GM12878 (cell line): ENCODE measurements at regions of chr18 and their contacts with region 1.

Region 1: DNA sequence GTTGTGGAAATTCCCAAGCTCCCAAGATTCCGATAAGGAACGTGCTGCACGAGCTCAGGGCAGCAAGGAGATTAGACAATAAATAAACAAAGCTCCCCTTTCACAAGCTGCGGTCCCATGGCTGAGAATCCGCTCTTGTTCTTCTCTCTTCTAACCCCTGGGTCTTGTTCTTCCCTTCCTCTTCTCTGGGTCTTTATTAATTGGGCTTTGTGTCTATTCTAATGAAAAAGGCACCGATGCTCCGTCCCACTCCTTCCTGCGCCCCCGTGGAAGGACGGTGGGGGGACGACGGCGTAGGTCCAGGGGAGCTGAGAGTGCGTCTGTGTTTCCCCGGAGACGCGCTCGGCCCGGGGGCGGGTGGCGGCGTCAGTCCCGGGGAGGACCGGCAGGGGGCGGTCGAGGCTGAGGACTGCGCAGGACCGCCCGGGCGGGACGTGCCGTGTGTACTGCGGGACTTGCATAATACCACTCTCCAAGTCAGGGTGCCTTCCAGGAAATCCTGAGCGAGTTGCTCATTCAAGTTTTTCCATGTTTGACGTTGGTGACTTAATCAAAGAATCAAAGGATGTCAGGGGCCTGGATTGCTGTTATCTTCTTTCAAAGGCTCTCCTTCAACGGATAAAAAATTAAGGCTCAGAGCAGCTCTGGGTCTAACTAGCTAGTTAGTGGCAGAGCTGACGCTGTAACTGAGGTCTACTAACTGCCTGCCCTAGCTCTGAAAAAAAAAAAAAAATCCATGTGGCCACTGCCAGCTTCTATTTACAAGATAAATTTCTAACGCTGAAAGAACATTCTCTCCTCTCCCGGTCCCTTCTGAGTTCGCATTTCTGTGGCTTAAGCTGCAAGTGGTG is 321.4 kb downstream of the TGIF1 start:
- DNase-seq: no peak
- ATAC-seq: peak; percentile 99
- H3K4me3 ChIP-seq: no peak overlapping the region
- H3K27ac ChIP-seq: no peak overlapping the region
- H3K4me1 ChIP-seq: no peaks in the 10 kb centered on the region
- H3K27me3 ChIP-seq: no peaks in the 10 kb centered on the region
- CTCF ChIP-seq: peak; percentile 79 to 87 (median 87)
- EP300 ChIP-seq: no peak
- POLR2A ChIP-seq: no peak
- RAD21 ChIP-seq: peak; percentile 72

Region 2: DNA sequence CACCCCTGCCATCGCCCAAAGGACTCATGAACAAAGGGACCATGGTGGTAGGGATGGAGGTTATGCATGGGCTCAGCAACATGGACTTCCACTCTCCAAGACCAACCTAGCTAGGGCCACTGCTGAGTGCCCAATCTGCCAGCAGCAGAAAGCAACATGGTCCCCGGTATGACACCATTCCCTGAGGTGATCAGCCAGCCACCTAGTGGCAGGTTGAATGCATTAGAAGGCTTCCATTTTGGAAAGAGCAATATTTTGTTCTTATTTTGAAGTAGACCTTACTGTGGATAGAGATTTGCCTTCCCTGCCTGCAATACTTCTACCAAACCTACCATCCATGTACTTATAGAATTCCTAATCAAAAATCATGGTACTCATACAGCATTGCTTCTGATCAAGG is 1299.8 kb before region 1 on chr18:
- CTCF ChIA-PET with region 1: no interaction called
- POLR2A ChIA-PET with region 1: no interaction called
- RAD21 ChIA-PET with region 1: no interaction called
- SMC1A ChIA-PET with region 1: no interaction called
- in situ Hi-C with region 1: no loop called
- intact Hi-C with region 1: no loop called
- DNase-seq: no peak
- ATAC-seq: peak; percentile 71
- H3K4me3 ChIP-seq: no peak overlapping the region
- H3K27ac ChIP-seq: no peak overlapping the region
- H3K4me1 ChIP-seq: no peaks in the 10 kb centered on the region
- H3K27me3 ChIP-seq: no peaks in the 10 kb centered on the region
- CTCF ChIP-seq: peak in 2 of 3 experiments; percentile 32 to 48; a peak in 3 of 6 replicates
- EP300 ChIP-seq: no peak
- POLR2A ChIP-seq: no peak
- RAD21 ChIP-seq: no peak

Region 3: GRCh38 chr18:3692113-3692621 is 79.2 kb before region 1 on chr18:
- CTCF ChIA-PET with region 1: interaction called, 8 read pairs
- POLR2A ChIA-PET with region 1: no interaction called
- RAD21 ChIA-PET with region 1: interaction called, 11 read pairs
- SMC1A ChIA-PET with region 1: interaction called, 3 read pairs
- in situ Hi-C with region 1: no loop called
- intact Hi-C with region 1: no loop called
- DNase-seq: no peak
- ATAC-seq: peak; percentile 59
- H3K4me3 ChIP-seq: no peak overlapping the region
- H3K27ac ChIP-seq: no peak overlapping the region
- H3K4me1 ChIP-seq: no peaks in the 10 kb centered on the region
- H3K27me3 ChIP-seq: no peaks in the 10 kb centered on the region
- CTCF ChIP-seq: no peak
- EP300 ChIP-seq: no peak
- POLR2A ChIP-seq: no peak
- RAD21 ChIP-seq: no peak

Region 4: GRCh38 chr18:3758531-3758930 is 12.8 kb before region 1 on chr18:
- CTCF ChIA-PET with region 1: interaction called, 35 read pairs
- POLR2A ChIA-PET with region 1: interaction called, 3 read pairs
- RAD21 ChIA-PET with region 1: no interaction called
- SMC1A ChIA-PET with region 1: interaction called, 14 read pairs
- in situ Hi-C with region 1: no loop called
- intact Hi-C with region 1: no loop called
- DNase-seq: no peak
- ATAC-seq: no peak
- H3K4me3 ChIP-seq: no peak overlapping the region
- H3K27ac ChIP-seq: no peak overlapping the region
- H3K4me1 ChIP-seq: no peaks in the 10 kb centered on the region
- H3K27me3 ChIP-seq: no peaks in the 10 kb centered on the region
- CTCF ChIP-seq: no peak
- EP300 ChIP-seq: no peak
- POLR2A ChIP-seq: no peak
- RAD21 ChIP-seq: no peak

Region 5: DNA sequence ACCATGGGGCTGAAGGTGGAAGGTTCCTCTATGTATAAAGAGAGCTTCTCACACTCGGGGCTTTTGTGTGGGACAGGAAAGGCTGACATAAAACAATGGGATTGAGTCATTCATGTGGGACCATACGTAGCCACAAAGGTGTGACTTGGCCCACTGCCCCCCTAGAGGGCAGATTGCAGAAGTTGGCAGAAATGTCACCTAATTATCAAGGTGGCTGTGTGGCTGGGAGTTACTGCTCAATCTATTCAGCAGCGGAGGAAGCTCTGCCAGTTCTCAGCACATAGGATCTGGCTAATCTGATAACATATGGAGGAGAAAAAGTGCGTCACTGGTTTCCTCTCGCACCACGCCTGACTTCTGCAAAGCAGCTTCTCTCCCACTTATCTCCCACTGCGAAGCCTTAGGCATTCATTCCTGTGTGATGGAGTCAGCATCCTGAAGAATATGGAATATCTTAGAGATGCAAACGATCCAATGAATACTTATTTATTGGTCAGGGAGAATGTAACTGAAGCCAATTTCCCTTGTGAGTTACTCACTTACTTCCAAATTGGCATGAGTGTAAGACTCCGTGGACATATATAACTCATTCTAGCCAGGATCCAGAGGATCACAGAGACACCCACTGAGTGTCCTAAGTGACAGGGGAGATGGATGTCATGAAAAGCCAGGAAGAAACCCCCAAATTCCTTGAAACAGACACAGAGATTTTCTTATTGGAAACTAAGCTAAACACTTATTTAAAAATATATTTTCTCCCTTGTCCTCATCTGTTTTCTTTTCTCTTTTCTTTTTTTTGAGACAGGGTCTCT is 23.4 kb after region 1 on chr18:
- CTCF ChIA-PET with region 1: interaction called, 18 read pairs
- POLR2A ChIA-PET with region 1: no interaction called
- RAD21 ChIA-PET with region 1: interaction called, 9 read pairs
- SMC1A ChIA-PET with region 1: interaction called, 11 read pairs
- in situ Hi-C with region 1: no loop called
- intact Hi-C with region 1: no loop called
- DNase-seq: no peak
- ATAC-seq: peak; percentile 62
- H3K4me3 ChIP-seq: no peak overlapping the region
- H3K27ac ChIP-seq: no peak overlapping the region
- H3K4me1 ChIP-seq: no peaks in the 10 kb centered on the region
- H3K27me3 ChIP-seq: no peaks in the 10 kb centered on the region
- CTCF ChIP-seq: no peak
- EP300 ChIP-seq: no peak
- POLR2A ChIP-seq: no peak
- RAD21 ChIP-seq: no peak

Region 6: DNA sequence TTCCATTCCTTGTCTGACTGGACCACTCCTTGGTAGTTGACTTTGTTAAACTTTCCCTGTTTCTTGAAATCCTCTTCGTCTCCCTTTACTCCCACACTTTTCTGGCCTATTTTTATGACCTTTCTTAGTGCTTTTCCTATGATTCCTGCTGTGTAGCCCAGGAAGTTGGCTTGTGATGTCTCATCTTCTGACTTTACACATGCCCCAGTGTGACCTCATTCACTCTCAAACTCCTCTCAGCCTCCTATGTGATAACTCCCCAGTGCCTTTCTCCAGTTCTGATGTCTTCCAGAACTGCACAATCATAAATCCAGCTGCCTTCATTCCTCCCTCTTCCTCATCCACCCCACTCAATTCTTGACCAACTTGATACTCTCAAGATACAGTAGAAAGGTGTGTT is 86.2 kb after region 1 on chr18:
- CTCF ChIA-PET with region 1: interaction called, 4 read pairs
- POLR2A ChIA-PET with region 1: no interaction called
- RAD21 ChIA-PET with region 1: interaction called, 3 read pairs
- SMC1A ChIA-PET with region 1: interaction called, 12 read pairs
- in situ Hi-C with region 1: no loop called
- intact Hi-C with region 1: no loop called
- DNase-seq: no peak
- ATAC-seq: no peak
- H3K4me3 ChIP-seq: no peak overlapping the region
- H3K27ac ChIP-seq: no peak overlapping the region
- H3K4me1 ChIP-seq: no peaks in the 10 kb centered on the region
- H3K27me3 ChIP-seq: no peaks in the 10 kb centered on the region
- CTCF ChIP-seq: no peak
- EP300 ChIP-seq: no peak
- POLR2A ChIP-seq: no peak
- RAD21 ChIP-seq: no peak

Region 7: GRCh38 chr18:3966985-3967856 is 195.9 kb after region 1 on chr18:
- CTCF ChIA-PET with region 1: interaction called, 13 read pairs
- POLR2A ChIA-PET with region 1: no interaction called
- RAD21 ChIA-PET with region 1: interaction called, 15 read pairs
- SMC1A ChIA-PET with region 1: interaction called, 6 read pairs
- in situ Hi-C with region 1: no loop called
- intact Hi-C with region 1: no loop called
- DNase-seq: no peak
- ATAC-seq: peak; percentile 66
- H3K4me3 ChIP-seq: no peak overlapping the region
- H3K27ac ChIP-seq: no peak overlapping the region
- H3K4me1 ChIP-seq: no peaks in the 10 kb centered on the region
- H3K27me3 ChIP-seq: no peaks in the 10 kb centered on the region
- CTCF ChIP-seq: no peak
- EP300 ChIP-seq: no peak
- POLR2A ChIP-seq: no peak
- RAD21 ChIP-seq: no peak

Region 8: DNA sequence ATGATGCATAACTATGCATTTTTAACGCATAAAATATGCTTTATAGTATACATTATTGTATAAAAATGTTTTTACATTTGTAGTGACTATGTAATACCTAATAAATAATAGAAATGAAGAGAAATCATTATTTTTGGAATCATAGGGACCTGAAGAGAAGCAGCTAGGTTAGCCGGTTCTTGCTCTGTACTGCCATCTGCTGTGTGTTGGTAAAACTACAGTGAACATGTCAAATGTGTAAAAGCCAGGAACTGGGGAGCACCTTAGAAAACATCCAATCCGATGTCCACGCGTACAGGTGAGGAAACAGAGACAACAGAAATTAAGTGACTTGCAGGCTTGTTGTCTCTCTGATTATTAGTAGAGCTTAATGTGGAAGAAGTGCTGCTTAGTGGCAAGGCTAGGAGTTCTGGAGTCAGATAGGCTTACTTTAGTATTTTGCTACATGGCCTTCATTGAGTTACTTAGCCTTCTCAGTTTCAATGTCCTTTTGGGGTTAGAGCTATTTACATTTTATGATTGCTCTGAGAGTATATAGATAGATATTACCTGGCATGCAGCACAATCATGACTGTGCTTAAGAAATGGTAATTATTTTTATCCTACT is 297.3 kb after region 1 on chr18:
- CTCF ChIA-PET with region 1: interaction called, 9 read pairs
- POLR2A ChIA-PET with region 1: no interaction called
- RAD21 ChIA-PET with region 1: interaction called, 5 read pairs
- SMC1A ChIA-PET with region 1: interaction called, 10 read pairs
- in situ Hi-C with region 1: no loop called
- intact Hi-C with region 1: loop called (anchors 5 kb)
- DNase-seq: peak; percentile 25
- ATAC-seq: peak; percentile 84
- H3K4me3 ChIP-seq: no peak overlapping the region
- H3K27ac ChIP-seq: no peak overlapping the region
- H3K4me1 ChIP-seq: no peaks in the 10 kb centered on the region
- H3K27me3 ChIP-seq: no peaks in the 10 kb centered on the region
- CTCF ChIP-seq: peak; percentile 54 to 72 (median 69)
- EP300 ChIP-seq: no peak
- POLR2A ChIP-seq: no peak
- RAD21 ChIP-seq: peak; percentile 41